H1 (cell line): ENCODE measurements at regions of chr14 and their contacts with region 1.

Region 1: DNA sequence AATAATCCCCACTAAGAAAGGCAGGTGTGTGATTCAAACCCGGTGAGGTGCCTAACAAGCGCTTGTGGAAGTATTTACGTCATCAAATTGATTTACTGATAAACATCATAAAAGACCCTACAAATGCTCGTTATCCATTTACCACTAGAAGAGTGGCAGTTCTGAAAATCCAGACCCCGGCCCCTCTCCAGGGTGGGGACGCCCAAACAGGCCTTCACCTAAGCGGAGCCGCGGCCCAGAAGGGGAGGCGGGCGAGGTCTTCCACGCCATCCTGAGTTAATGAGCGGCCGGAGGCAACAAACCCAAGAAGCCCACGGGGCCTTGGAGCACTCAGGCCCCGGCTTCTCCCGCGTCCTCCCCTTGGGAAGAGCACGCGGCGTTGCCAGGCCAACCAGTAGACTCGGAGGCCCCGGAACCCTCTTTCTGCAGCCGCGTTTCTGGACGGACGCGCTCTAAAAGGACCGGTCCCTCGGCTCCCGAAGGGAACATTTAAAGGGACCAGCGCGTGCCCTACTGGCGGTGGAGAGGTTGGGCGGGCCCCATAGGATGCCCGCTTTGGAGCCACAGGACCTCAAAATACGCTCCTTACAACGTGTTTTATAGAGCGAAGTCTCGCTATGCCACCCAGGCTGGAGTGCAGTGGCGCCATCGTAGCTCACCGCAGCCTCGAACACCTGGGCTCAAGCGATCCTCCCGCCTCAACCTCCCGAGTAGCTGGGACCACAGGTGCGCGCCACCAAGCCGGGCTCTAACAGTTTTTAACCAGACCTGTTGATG is 3.5 kb downstream of the PTPN21 start:
- DNase-seq: peak in 1 of 2 experiments; percentile 96
- H3K4me3 ChIP-seq: peak overlapping the region; percentile 57 to 69 (median 62)
- H3K27ac ChIP-seq: no peak overlapping the region
- H3K4me1 ChIP-seq: peaks cover 0 to 10% (median 3%) of the 10 kb centered on the region in 4 experiments; a peak in 3 of 7 replicates
- H3K27me3 ChIP-seq: no peaks in the 10 kb centered on the region
- CTCF ChIP-seq: peak in 2 of 3 experiments; percentile 28 to 41; a peak in 2 of 4 replicates
- EP300 ChIP-seq: peak in 1 of 2 experiments; percentile 71; a peak in 1 of 3 replicates
- POLR2A ChIP-seq: peak; percentile 49 to 73
- RAD21 ChIP-seq: peak; percentile 55 to 58

Region 2: DNA sequence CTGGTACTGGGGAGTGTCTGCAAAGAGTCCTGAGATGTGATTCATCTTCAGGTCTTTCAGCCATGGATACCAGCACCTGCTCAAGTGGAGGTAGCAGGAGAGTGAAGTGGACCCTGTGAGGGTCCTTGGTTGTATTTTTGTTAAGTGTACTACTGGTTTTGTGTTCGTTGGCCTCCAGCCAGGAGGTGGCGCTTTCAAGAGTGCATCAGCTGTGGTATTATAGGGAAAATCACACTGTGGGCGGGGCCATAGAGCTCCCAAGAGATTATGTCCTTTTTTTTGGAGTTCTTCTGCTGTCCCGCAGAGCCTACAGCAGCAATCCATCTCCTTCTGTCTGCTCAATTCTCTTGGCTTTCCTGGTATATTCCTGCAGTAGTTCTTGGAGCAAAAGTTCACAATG is 99.1 kb before region 1 on chr14:
- CTCF ChIA-PET with region 1: no interaction called
- POLR2A ChIA-PET with region 1: no interaction called
- DNase-seq: peak in 1 of 2 experiments; percentile 52
- H3K4me3 ChIP-seq: no peak overlapping the region
- H3K27ac ChIP-seq: no peak overlapping the region
- H3K4me1 ChIP-seq: no peaks in the 10 kb centered on the region
- H3K27me3 ChIP-seq: no peaks in the 10 kb centered on the region
- CTCF ChIP-seq: peak; percentile 28 to 42 (median 30)
- EP300 ChIP-seq: no peak
- POLR2A ChIP-seq: no peak
- RAD21 ChIP-seq: peak in 1 of 2 experiments; percentile 22; a peak in 2 of 4 replicates

Region 3: GRCh38 chr14:88492272-88493089 is 58.8 kb before region 1 on chr14:
- CTCF ChIA-PET with region 1: interaction called, 21 read pairs
- POLR2A ChIA-PET with region 1: no interaction called
- DNase-seq: peak; percentile 15 to 84
- H3K4me3 ChIP-seq: no peak overlapping the region
- H3K27ac ChIP-seq: no peak overlapping the region
- H3K4me1 ChIP-seq: peaks cover 0 to 3% (median 1%) of the 10 kb centered on the region in 4 experiments; a peak in 2 of 7 replicates
- H3K27me3 ChIP-seq: no peaks in the 10 kb centered on the region
- CTCF ChIP-seq: peak; percentile 59 to 83 (median 70)
- EP300 ChIP-seq: no peak
- POLR2A ChIP-seq: no peak
- RAD21 ChIP-seq: peak; percentile 65 to 72

Region 4: DNA sequence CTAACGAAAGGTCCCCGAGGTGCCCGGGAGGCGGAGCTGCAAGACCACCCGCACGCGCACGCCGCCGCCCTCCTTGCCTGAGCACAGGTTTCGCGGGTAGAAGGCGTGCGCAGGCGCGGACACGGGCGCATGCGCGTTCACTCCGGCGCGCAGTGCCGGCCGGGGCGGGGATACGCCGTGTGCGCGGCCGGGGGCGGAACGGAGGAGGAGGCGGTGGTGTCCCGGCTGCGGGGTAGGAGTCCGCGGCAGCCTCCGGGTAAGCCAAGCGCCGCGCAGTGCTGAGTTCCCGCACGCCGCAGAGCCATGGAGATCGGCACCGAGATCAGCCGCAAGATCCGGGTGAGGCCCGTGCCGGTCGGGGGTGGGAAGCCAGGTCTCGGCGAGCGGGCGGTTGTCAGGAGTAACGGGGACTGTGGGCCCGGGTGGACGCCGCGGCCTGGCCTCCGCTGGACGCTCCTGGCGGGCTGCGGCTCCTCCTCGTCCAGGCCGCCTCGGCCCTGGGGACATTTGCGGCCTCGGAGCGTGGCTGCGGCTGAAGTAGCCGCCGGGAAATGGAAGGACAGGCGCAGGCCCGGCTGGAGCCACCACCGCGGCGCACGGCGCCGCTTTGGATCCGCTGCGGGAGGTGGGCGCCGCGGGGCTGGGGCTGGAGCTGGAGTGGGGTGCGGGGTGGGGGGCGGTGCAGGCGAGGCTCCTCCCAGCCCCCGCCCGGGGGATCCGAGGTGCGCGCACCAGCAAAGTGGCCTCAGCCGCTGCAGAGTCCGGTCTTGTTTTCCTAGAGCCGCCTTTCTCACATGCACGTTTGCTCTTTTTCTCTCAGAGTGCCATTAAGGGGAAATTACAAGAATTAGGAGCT is 11.8 kb after region 1 on chr14 and contains the start of gene ZC3H14:
- CTCF ChIA-PET with region 1: interaction called, 7 read pairs
- POLR2A ChIA-PET with region 1: interaction called, 12 read pairs
- DNase-seq: peak in 1 of 2 experiments; percentile 92
- H3K4me3 ChIP-seq: peak within 1 kb of the TSS; percentile 90 to 97 (median 92)
- H3K27ac ChIP-seq: peak within 1 kb of the TSS; percentile 88
- H3K4me1 ChIP-seq: peaks cover 0 to 4% (median 2%) of the 10 kb centered on the region in 4 experiments; a peak in 5 of 7 replicates
- H3K27me3 ChIP-seq: no peaks in the 10 kb centered on the region
- CTCF ChIP-seq: no peak
- EP300 ChIP-seq: peak in 1 of 2 experiments; percentile 18; a peak in 1 of 3 replicates
- POLR2A ChIP-seq: peak; percentile 79 to 85
- RAD21 ChIP-seq: peak; percentile 11 to 26; a peak in 2 of 4 replicates
- total RNA-seq, gene ZC3H14: 86.0 and 90.1 TPM in 2 replicates

Region 5: DNA sequence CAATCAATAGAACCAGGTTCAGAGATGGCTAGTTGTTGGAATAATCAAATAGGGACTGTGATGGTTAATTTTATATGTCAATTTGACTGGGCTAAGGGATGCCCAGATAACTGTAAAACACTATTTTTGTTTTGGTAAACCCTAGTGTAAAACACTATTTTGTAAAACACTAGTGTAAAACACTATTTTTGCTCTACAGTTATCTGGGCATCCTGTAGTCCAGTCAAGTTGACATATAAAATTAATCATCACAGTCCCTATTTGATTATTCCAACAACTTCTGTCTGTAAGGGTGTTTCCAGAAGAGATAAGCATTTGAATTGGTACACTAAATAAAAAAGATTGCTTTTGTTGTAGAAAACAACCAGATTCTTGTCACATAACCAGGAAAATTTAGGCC is 257.1 kb after region 1 on chr14:
- CTCF ChIA-PET with region 1: no interaction called
- POLR2A ChIA-PET with region 1: no interaction called
- DNase-seq: no peak
- H3K4me3 ChIP-seq: no peak overlapping the region
- H3K27ac ChIP-seq: no peak overlapping the region
- H3K4me1 ChIP-seq: no peaks in the 10 kb centered on the region
- H3K27me3 ChIP-seq: no peaks in the 10 kb centered on the region
- CTCF ChIP-seq: no peak
- EP300 ChIP-seq: no peak
- POLR2A ChIP-seq: no peak
- RAD21 ChIP-seq: no peak